Activated CD4-positive, alpha-beta T cell treated with anti-CD3 and anti-CD28 coated beads, Interleukin-2, amount 10 ng/mL, durations not matched to agents 24 days and 14 days (primary cell): ENCODE measurements at regions of chr20 and their contacts with region 1.

Region 1: GRCh38 chr20:815914-816606 is 17.5 kb upstream of the FAM110A start:
- DNase-seq: peak; percentile 89
- H3K4me3 Mint-ChIP-seq: no peak overlapping the region
- H3K27ac Mint-ChIP-seq: no peak overlapping the region
- H3K4me1 Mint-ChIP-seq: peaks cover 2% of the 10 kb centered on the region
- H3K27me3 Mint-ChIP-seq: peaks cover 1% of the 10 kb centered on the region

Region 2: DNA sequence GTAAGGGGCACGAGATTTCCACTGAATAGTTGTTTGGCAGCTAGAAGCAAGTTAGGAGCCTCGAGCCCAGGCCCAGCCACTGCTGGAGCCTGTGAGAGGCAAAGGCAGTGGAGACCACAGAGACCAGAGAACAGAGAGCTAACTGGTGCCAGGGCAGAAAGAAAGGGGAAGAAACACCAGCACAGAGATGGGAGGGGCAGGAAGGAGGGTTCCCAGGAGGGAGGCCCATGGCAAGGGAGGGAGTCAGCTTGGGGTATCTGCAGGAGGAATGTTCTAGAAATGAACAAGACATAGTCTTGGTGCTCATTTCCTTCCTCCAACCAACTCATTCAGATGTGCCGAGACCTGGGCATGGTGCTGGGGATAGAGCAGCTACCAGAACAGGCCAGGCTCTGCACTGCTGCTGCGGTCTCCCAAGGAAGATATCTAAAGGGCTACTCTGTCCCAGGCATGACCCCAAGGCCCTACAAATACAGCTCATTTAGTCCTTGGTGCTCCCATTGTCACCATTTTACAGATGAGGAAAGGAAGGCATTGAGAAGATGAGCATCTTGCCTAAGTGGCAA is 89.4 kb after region 1 on chr20:
- intact Hi-C with region 1: no loop called
- DNase-seq: no peak
- H3K4me3 Mint-ChIP-seq: no peak overlapping the region
- H3K27ac Mint-ChIP-seq: no peak overlapping the region
- H3K4me1 Mint-ChIP-seq: peaks cover 2% of the 10 kb centered on the region
- H3K27me3 Mint-ChIP-seq: no peaks in the 10 kb centered on the region

Region 3: GRCh38 chr20:956330-956951 is 140.4 kb after region 1 on chr20:
- intact Hi-C with region 1: loop called (anchors 1 kb)
- DNase-seq: peak; percentile 93
- H3K4me3 Mint-ChIP-seq: no peak overlapping the region
- H3K27ac Mint-ChIP-seq: no peak overlapping the region
- H3K4me1 Mint-ChIP-seq: peaks cover 4% of the 10 kb centered on the region
- H3K27me3 Mint-ChIP-seq: peaks cover 19% of the 10 kb centered on the region

Region 4: DNA sequence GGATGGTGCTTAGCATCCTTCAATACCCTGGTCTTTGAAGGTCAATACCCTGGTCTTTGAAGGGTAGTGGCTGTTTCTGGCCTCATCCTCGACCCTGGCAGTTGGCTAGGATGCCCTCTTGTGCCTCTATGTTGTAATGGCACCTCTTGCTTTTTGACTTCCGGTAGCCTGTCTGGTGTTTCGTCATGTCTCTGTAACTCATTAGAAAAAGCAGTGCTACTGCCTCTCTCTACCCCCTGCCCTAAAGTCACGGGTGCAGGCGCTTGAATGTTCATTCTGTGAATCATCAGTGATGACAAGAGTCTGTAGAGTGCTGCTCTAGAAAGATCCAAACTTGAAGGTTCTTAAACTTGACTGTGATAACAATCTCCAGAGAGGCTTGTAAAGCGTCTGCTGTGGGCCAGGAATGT is 157.7 kb after region 1 on chr20:
- intact Hi-C with region 1: loop called (anchors 1 kb)
- DNase-seq: peak; percentile 81
- H3K4me3 Mint-ChIP-seq: no peak overlapping the region
- H3K27ac Mint-ChIP-seq: no peak overlapping the region
- H3K4me1 Mint-ChIP-seq: peaks cover 2% of the 10 kb centered on the region
- H3K27me3 Mint-ChIP-seq: peaks cover 3% of the 10 kb centered on the region

Region 5: GRCh38 chr20:1108437-1108920 is 292.4 kb after region 1 on chr20:
- intact Hi-C with region 1: loop called (anchors 2 kb)
- DNase-seq: peak; percentile 83
- H3K4me3 Mint-ChIP-seq: no peak overlapping the region
- H3K27ac Mint-ChIP-seq: no peak overlapping the region
- H3K4me1 Mint-ChIP-seq: no peaks in the 10 kb centered on the region
- H3K27me3 Mint-ChIP-seq: peaks cover 4% of the 10 kb centered on the region

Region 6: DNA sequence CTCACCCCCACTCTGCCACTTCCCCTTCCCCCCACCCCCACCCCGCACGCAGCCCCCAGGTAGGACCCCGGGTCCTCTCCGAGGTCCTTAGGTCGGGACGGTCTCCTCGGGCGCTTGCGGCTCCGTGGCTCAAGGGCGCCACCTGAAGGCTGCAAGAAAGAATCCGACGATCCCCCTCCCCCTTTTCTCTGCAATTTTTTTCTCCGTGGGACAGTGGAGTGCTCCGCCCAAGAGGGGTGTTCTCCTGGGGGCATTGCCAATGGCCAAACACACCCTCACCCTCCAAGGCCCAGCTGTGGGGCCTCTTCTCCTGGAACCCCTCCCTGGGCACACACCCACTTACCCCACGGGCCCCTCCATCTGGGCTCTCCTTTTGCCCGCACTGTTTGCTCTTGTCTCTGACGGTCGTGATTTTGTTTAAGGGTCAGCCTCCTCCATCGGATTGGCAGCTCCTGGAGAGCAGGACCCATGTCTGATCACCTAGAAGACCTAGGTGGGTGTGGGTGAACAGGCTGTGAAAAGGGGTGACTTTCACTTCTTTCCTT is 369.8 kb after region 1 on chr20:
- intact Hi-C with region 1: loop called (anchors 5 kb)
- DNase-seq: peak; percentile 87
- H3K4me3 Mint-ChIP-seq: peak overlapping the region; percentile 78
- H3K27ac Mint-ChIP-seq: no peak overlapping the region
- H3K4me1 Mint-ChIP-seq: peaks cover 10% of the 10 kb centered on the region
- H3K27me3 Mint-ChIP-seq: peaks cover 47% of the 10 kb centered on the region